ENCODE measurements at regions of chr12 and their contacts with region 1.

Region 1: GRCh38 chr12:52156736-52157565 is 34.9 kb downstream of the KRT80 start:
- DNase-seq: peak; percentile 84
- H3K4me3 ChIP-seq: no peak overlapping the region
- H3K27ac ChIP-seq: no peak overlapping the region
- H3K4me1 ChIP-seq: peaks cover 0 to 7% (median 7%) of the 10 kb centered on the region in 4 donors
- H3K27me3 ChIP-seq: no peaks in the 10 kb centered on the region
- CTCF ChIP-seq: peak; percentile 92 to 98 (median 94)
- EP300 ChIP-seq: no peak
- POLR2A ChIP-seq: no peak

Region 2: GRCh38 chr12:51103977-51104376 is 1053.0 kb before region 1 on chr12:
- intact Hi-C with region 1: no loop called
- DNase-seq: no peak
- H3K4me3 ChIP-seq: no peak overlapping the region
- H3K27ac ChIP-seq: no peak overlapping the region
- H3K4me1 ChIP-seq: no peaks in the 10 kb centered on the region
- H3K27me3 ChIP-seq: no peaks in the 10 kb centered on the region
- CTCF ChIP-seq: no peak
- EP300 ChIP-seq: no peak
- POLR2A ChIP-seq: no peak

Region 3: GRCh38 chr12:51295651-51296050 is 861.3 kb before region 1 on chr12:
- intact Hi-C with region 1: no loop called
- DNase-seq: no peak
- H3K4me3 ChIP-seq: no peak overlapping the region
- H3K27ac ChIP-seq: no peak overlapping the region
- H3K4me1 ChIP-seq: no peaks in the 10 kb centered on the region
- H3K27me3 ChIP-seq: no peaks in the 10 kb centered on the region
- CTCF ChIP-seq: no peak
- EP300 ChIP-seq: no peak
- POLR2A ChIP-seq: no peak

Region 4: DNA sequence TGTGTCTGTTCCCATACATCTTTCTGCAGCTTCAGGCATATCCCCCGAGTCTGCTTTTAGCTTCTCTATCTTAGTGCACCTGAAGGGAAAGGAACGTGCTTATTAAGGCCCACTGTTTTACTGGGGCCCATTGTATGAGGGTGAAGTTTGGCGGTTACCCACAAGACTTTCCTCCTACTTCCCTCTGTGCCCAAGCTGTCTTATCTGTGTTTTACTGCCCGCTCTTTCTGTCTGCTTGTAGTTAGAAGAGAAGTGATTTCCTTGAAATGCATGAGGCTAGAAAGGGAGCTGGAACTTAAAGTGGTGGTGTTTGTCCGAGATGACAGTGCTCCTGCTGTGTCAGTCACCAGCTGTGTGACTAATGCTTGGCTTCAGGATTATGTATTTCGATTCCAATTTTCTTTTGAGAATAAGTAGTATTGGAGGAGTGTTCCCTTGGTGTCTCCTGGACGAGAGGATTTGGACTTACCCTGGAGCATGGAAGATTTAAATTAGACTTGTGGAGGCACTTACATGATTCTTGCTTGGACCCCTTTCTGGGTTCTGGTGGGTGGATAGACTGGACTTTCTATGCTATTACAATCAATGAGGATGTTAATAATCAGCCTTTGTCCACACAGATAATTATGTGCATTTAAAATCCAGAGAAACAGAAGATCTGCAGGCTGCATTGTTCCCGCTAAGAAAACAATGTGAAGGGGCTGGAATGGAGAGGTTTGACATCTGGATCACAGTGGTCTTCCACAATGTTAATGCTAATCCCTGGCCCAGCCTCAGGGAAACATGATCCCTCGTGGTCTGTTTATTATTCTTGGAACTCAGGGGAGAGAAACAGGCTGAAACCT is 103.6 kb after region 1 on chr12:
- intact Hi-C with region 1: no loop called
- DNase-seq: no peak
- H3K4me3 ChIP-seq: no peak overlapping the region
- H3K27ac ChIP-seq: no peak overlapping the region
- H3K4me1 ChIP-seq: peaks cover 0 to 13% (median 8%) of the 10 kb centered on the region in 4 donors
- H3K27me3 ChIP-seq: peaks cover 0 to 40% (median 18%) of the 10 kb centered on the region in 3 donors
- CTCF ChIP-seq: no peak
- EP300 ChIP-seq: no peak
- POLR2A ChIP-seq: no peak

Region 5: GRCh38 chr12:52327052-52327829 is 170.3 kb after region 1 on chr12:
- intact Hi-C with region 1: loop called (anchors 2 kb)
- DNase-seq: peak; percentile 87
- H3K4me3 ChIP-seq: no peak overlapping the region
- H3K27ac ChIP-seq: no peak overlapping the region
- H3K4me1 ChIP-seq: no peaks in the 10 kb centered on the region
- H3K27me3 ChIP-seq: no peaks in the 10 kb centered on the region
- CTCF ChIP-seq: peak; percentile 55 to 74 (median 70)
- EP300 ChIP-seq: no peak
- POLR2A ChIP-seq: no peak

Region 6: GRCh38 chr12:52879394-52880351 is 722.7 kb after region 1 on chr12:
- intact Hi-C with region 1: loop called (anchors 2 kb)
- DNase-seq: peak; percentile 87
- H3K4me3 ChIP-seq: peak overlapping the region in 3 of 4 donors; percentile 7 to 35 (median 19)
- H3K27ac ChIP-seq: peak overlapping the region in 3 of 4 donors; percentile 15 to 61 (median 56)
- H3K4me1 ChIP-seq: peaks cover 0 to 25% (median 19%) of the 10 kb centered on the region in 4 donors
- H3K27me3 ChIP-seq: no peaks in the 10 kb centered on the region
- CTCF ChIP-seq: peak; percentile 72 to 82 (median 76)
- EP300 ChIP-seq: no peak
- POLR2A ChIP-seq: no peak

Region 7: DNA sequence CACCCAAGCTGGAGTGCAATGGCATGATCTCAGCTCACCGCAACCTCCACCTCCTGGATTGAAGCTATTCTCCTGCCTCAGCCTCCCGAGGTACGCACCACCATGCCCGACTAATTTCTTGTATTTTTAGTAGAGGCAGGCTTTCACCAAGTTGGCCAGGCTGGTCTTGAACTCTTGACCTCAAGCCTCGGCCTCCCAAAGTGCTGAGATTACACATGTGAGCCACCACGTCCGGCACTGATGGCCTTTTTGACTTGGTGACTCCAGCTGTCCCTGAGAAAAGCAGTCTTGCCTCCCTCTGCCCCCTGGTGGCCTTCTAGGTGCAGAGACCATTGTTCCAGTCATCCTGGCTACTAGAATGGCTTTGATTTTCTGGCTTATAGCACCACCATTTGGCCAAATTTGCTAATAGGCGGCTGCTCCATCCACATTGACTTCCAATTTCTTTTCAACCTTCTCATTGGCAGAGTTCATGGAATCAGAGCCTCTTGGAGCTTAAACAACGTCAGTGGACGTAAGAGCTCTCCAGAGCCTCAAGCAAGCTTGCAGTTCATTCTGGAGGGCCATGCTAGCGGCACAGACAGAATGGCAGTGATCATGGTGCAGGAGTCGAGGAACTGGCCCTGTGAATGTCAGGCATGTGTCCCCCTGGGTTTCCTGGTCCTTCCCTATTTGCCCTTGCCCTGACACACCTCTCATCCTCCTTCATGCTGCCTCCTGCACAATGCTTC is 823.9 kb after region 1 on chr12:
- intact Hi-C with region 1: loop called (anchors 5 kb)
- DNase-seq: peak; percentile 91
- H3K4me3 ChIP-seq: no peak overlapping the region
- H3K27ac ChIP-seq: no peak overlapping the region
- H3K4me1 ChIP-seq: no peaks in the 10 kb centered on the region
- H3K27me3 ChIP-seq: peaks cover 0 to 9% (median 0%) of the 10 kb centered on the region in 3 donors
- CTCF ChIP-seq: peak; percentile 92 to 99 (median 96)
- EP300 ChIP-seq: no peak
- POLR2A ChIP-seq: no peak

Measured in sigmoid colon (tissue), 7 donors.